ENCODE measurements at regions of chr1 and their contacts with region 1.

Region 1: DNA sequence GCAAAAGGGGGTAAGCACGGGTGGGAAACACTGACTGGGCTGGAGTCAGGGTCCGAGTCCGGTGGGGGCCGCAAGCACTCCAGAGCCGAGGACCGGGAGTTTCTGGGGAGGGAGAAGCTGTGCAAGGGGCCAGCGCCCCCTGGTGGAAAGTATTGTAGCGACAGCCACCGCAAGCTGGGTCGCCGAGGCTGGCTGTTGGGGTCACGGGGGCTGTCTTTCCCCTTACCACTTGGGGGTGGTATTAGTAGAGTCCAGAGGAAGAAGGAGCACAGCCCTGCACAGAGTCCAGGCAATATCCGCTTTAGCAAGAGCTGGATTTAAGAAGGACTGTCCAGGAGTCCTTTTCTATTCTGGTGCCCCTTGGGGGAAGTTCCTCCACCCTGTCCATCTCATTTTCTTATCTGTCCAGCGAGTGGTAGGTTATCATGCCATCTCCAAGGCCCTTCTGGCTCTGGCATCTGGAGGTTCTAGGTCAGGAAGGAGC is 17.9 kb upstream of the ETV3 start:
- DNase-seq: peak; percentile 69 to 98
- H3K4me3 ChIP-seq: no peak overlapping the region
- H3K27ac ChIP-seq: no peak overlapping the region
- H3K4me1 ChIP-seq: peaks cover 3 to 11% (median 6%) of the 10 kb centered on the region in 4 experiments
- H3K27me3 ChIP-seq: no peaks in the 10 kb centered on the region; a peak in 1 of 7 replicates
- CTCF ChIP-seq: peak; percentile 92 to 98 (median 97)
- EP300 ChIP-seq: peak in 1 of 2 experiments; percentile 22; a peak in 1 of 3 replicates
- POLR2A ChIP-seq: no peak; a peak in 1 of 3 replicates
- RAD21 ChIP-seq: peak; percentile 87 to 91

Region 2: GRCh38 chr1:157073944-157074767 is 81.9 kb before region 1 on chr1:
- CTCF ChIA-PET with region 1: interaction called, 11 read pairs
- POLR2A ChIA-PET with region 1: no interaction called
- DNase-seq: peak; percentile 54 to 84
- H3K4me3 ChIP-seq: no peak overlapping the region
- H3K27ac ChIP-seq: no peak overlapping the region
- H3K4me1 ChIP-seq: no peaks in the 10 kb centered on the region
- H3K27me3 ChIP-seq: peaks cover 0 to 3% (median 1%) of the 10 kb centered on the region in 4 experiments; a peak in 2 of 7 replicates
- CTCF ChIP-seq: peak; percentile 63 to 82 (median 75)
- EP300 ChIP-seq: no peak
- POLR2A ChIP-seq: no peak
- RAD21 ChIP-seq: peak; percentile 57 to 69

Region 3: DNA sequence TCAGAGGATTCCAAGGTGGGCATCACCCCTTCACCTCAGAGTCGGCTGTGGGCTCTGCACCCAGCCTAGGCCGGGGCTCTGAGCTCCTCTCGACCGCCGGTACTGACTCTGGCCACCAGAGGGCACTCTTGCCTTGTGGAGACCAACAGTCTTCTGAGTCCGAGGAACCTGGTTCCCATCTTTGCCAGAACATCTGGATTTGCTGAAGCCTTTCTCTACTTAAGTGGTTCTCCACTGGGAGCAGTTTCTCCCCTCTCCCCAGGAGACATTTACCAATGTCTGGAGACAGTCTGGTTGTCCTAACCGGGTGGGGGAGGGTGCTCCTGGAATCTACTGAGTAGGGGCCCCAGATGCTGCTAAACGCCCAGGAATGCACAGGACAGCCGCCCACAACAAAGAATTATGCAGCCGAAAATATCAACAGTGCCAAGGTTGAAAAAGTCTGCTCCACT is 65.9 kb before region 1 on chr1:
- CTCF ChIA-PET with region 1: interaction called, 218 read pairs
- POLR2A ChIA-PET with region 1: interaction called, 8 read pairs
- DNase-seq: peak; percentile 75 to 99
- H3K4me3 ChIP-seq: no peak overlapping the region
- H3K27ac ChIP-seq: no peak overlapping the region
- H3K4me1 ChIP-seq: peaks cover 3 to 5% (median 3%) of the 10 kb centered on the region in 4 experiments; a peak in 5 of 7 replicates
- H3K27me3 ChIP-seq: no peaks in the 10 kb centered on the region; a peak in 2 of 7 replicates
- CTCF ChIP-seq: peak; percentile 92 to 98 (median 97)
- EP300 ChIP-seq: peak in 1 of 2 experiments; percentile 23; a peak in 1 of 3 replicates
- POLR2A ChIP-seq: no peak
- RAD21 ChIP-seq: peak; percentile 99 to 100

Region 4: GRCh38 chr1:157117527-157118057 is 38.5 kb before region 1 on chr1:
- CTCF ChIA-PET with region 1: interaction called, 26 read pairs
- POLR2A ChIA-PET with region 1: interaction called, 4 read pairs
- DNase-seq: peak in 1 of 2 experiments; percentile 52
- H3K4me3 ChIP-seq: no peak overlapping the region
- H3K27ac ChIP-seq: no peak overlapping the region; the same call in 1 of the 2 replicates
- H3K4me1 ChIP-seq: peaks cover 18 to 42% (median 27%) of the 10 kb centered on the region in 4 experiments
- H3K27me3 ChIP-seq: peaks cover 0 to 3% (median under 1%) of the 10 kb centered on the region in 4 experiments; a peak in 4 of 7 replicates
- CTCF ChIP-seq: no peak
- EP300 ChIP-seq: no peak
- POLR2A ChIP-seq: no peak
- RAD21 ChIP-seq: no peak

Region 5: GRCh38 chr1:157138220-157139051 is 17.7 kb before region 1 on chr1 and contains the start of gene ETV3:
- CTCF ChIA-PET with region 1: interaction called, 187 read pairs
- POLR2A ChIA-PET with region 1: interaction called, 70 read pairs
- DNase-seq: peak; percentile 70 to 89
- H3K4me3 ChIP-seq: peak within 1 kb of the TSS; percentile 68 to 99 (median 94)
- H3K27ac ChIP-seq: peak within 1 kb of the TSS; percentile 87
- H3K4me1 ChIP-seq: peaks cover 2 to 17% (median 7%) of the 10 kb centered on the region in 4 experiments; a peak in 4 of 7 replicates
- H3K27me3 ChIP-seq: no peaks in the 10 kb centered on the region
- CTCF ChIP-seq: no peak
- EP300 ChIP-seq: peak in 1 of 2 experiments; percentile 24; a peak in 1 of 3 replicates
- POLR2A ChIP-seq: peak in 1 of 2 experiments; percentile 71; a peak in 1 of 3 replicates
- RAD21 ChIP-seq: no peak
- total RNA-seq, gene ETV3: 23.8 and 26.6 TPM in 2 replicates

Measured in H1 (cell line).